ENCODE measurements at regions of chr1 and their contacts with region 1.

Region 1: GRCh38 chr1:26602378-26602959 is 72.9 kb downstream of the RPS6KA1 start:
- DNase-seq: peak; percentile 45
- ATAC-seq: peak; percentile 63
- H3K4me3 Mint-ChIP-seq: no peak overlapping the region
- H3K27ac Mint-ChIP-seq: no peak overlapping the region
- H3K4me1 Mint-ChIP-seq: peaks cover 3% of the 10 kb centered on the region
- H3K27me3 Mint-ChIP-seq: no peaks in the 10 kb centered on the region

Region 2: DNA sequence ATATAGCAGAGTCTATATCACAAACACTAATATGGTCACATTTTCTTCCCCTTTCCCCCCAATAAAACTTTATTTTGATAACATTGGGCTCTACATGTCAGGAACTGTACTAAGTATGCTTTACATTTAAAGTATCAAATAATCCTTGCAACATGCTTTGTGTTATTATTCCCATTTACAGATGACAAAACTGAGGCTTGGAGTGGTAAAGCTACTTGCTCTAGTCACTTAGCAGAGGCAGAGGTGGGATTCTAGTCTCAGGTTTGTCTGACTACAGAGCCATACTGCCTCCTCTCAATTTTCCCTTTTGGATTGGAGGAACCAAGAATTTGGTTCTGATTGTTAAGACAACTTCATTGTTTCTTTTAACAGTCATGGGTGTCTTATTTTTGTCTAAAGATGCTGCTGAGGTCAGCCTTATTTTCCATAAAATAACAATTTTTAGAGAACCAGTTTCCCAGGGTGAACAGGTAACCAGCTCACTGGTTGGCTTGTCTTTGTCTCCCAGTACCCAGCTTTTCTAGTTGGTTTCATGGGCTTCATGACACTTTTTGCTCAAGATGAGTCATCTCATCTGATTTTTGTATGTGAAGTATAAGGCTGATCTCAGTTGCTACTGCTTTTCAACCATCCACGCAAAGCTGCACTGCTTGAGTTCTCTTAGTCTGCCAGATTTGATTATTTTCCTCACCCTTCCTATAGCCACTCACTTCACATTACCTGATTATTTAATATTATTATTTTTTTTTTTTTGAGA is 12.4 kb after region 1 on chr1:
- CTCF ChIA-PET with region 1: interaction called, 14 read pairs
- POLR2A ChIA-PET with region 1: no interaction called
- intact Hi-C with region 1: no loop called
- DNase-seq: no peak
- ATAC-seq: peak; percentile 60
- H3K4me3 Mint-ChIP-seq: no peak overlapping the region
- H3K27ac Mint-ChIP-seq: no peak overlapping the region
- H3K4me1 Mint-ChIP-seq: peaks cover 24% of the 10 kb centered on the region
- H3K27me3 Mint-ChIP-seq: peaks cover 3% of the 10 kb centered on the region

Region 3: GRCh38 chr1:26700711-26701110 is 98.2 kb after region 1 on chr1:
- CTCF ChIA-PET with region 1: interaction called, 10 read pairs
- POLR2A ChIA-PET with region 1: no interaction called
- intact Hi-C with region 1: no loop called
- DNase-seq: no peak
- ATAC-seq: no peak
- H3K4me3 Mint-ChIP-seq: no peak overlapping the region
- H3K27ac Mint-ChIP-seq: no peak overlapping the region
- H3K4me1 Mint-ChIP-seq: peaks cover 10% of the 10 kb centered on the region
- H3K27me3 Mint-ChIP-seq: no peaks in the 10 kb centered on the region

Region 4: DNA sequence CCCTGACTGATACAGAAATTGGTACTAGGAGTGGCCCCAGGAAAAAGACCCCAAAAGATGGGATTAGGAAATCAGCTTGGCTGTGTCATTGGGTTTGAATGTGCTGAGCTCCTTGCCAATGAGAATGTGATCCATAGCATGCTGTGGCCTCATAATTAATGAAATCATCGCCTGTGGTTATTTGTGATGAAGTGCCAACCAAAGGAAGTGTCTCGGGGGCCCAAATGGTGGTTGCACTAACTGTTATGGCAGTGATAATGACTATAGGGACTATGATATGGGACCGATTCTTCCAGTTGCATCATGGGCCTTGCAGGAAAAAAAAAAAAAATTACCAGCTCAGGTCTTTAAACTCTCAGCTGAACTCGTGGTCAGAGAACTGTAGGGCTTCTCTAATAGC is 208.6 kb after region 1 on chr1:
- CTCF ChIA-PET with region 1: interaction called, 34 read pairs
- POLR2A ChIA-PET with region 1: no interaction called
- intact Hi-C with region 1: no loop called
- DNase-seq: no peak
- ATAC-seq: no peak
- H3K4me3 Mint-ChIP-seq: no peak overlapping the region
- H3K27ac Mint-ChIP-seq: no peak overlapping the region
- H3K4me1 Mint-ChIP-seq: peaks cover 17% of the 10 kb centered on the region
- H3K27me3 Mint-ChIP-seq: no peaks in the 10 kb centered on the region

Region 5: GRCh38 chr1:26882696-26883463 is 280.4 kb after region 1 on chr1:
- CTCF ChIA-PET with region 1: interaction called, 13 read pairs
- POLR2A ChIA-PET with region 1: no interaction called
- intact Hi-C with region 1: loop called (anchors 1 to 2 kb)
- DNase-seq: no peak
- ATAC-seq: no peak
- H3K4me3 Mint-ChIP-seq: no peak overlapping the region
- H3K27ac Mint-ChIP-seq: no peak overlapping the region
- H3K4me1 Mint-ChIP-seq: peaks cover 3% of the 10 kb centered on the region
- H3K27me3 Mint-ChIP-seq: no peaks in the 10 kb centered on the region

Region 6: GRCh38 chr1:26907071-26907917 is 304.8 kb after region 1 on chr1:
- CTCF ChIA-PET with region 1: no interaction called
- POLR2A ChIA-PET with region 1: no interaction called
- intact Hi-C with region 1: no loop called
- DNase-seq: no peak
- ATAC-seq: no peak
- H3K4me3 Mint-ChIP-seq: no peak overlapping the region
- H3K27ac Mint-ChIP-seq: no peak overlapping the region
- H3K4me1 Mint-ChIP-seq: no peaks in the 10 kb centered on the region
- H3K27me3 Mint-ChIP-seq: no peaks in the 10 kb centered on the region